Activated T-helper 2 cell treated with anti-CD3 and anti-CD28 coated beads, Interferon-gamma antibody, Interleukin-2, Interleukin-4, amounts not matched to agents 10 μg/mL and 5 μg/mL and 100 μg/mL, durations not matched to agents 14 hours and 24 hours and 36 hours (primary cell): ENCODE measurements at regions of chr2 and their contacts with region 1.

Region 1: GRCh38 chr2:55519938-55520885 is 694 bp downstream of the CFAP36 start:
- DNase-seq: no peak
- H3K4me3 Mint-ChIP-seq: peak overlapping the region; percentile 93
- H3K27ac Mint-ChIP-seq: peak overlapping the region; percentile 86
- H3K4me1 Mint-ChIP-seq: peaks cover 13% of the 10 kb centered on the region
- H3K27me3 Mint-ChIP-seq: no peaks in the 10 kb centered on the region

Region 2: GRCh38 chr2:55403256-55403998 is 116.8 kb before region 1 on chr2:
- intact Hi-C with region 1: no loop called
- DNase-seq: no peak
- H3K4me3 Mint-ChIP-seq: no peak overlapping the region
- H3K27ac Mint-ChIP-seq: no peak overlapping the region
- H3K4me1 Mint-ChIP-seq: no peaks in the 10 kb centered on the region
- H3K27me3 Mint-ChIP-seq: no peaks in the 10 kb centered on the region

Region 3: GRCh38 chr2:55530539-55531081 is 10.4 kb after region 1 on chr2:
- intact Hi-C with region 1: loop called (anchors 1 kb)
- DNase-seq: peak; percentile 24
- H3K4me3 Mint-ChIP-seq: peak overlapping the region; percentile 20
- H3K27ac Mint-ChIP-seq: peak overlapping the region; percentile 92
- H3K4me1 Mint-ChIP-seq: peaks cover 19% of the 10 kb centered on the region
- H3K27me3 Mint-ChIP-seq: no peaks in the 10 kb centered on the region

Region 4: DNA sequence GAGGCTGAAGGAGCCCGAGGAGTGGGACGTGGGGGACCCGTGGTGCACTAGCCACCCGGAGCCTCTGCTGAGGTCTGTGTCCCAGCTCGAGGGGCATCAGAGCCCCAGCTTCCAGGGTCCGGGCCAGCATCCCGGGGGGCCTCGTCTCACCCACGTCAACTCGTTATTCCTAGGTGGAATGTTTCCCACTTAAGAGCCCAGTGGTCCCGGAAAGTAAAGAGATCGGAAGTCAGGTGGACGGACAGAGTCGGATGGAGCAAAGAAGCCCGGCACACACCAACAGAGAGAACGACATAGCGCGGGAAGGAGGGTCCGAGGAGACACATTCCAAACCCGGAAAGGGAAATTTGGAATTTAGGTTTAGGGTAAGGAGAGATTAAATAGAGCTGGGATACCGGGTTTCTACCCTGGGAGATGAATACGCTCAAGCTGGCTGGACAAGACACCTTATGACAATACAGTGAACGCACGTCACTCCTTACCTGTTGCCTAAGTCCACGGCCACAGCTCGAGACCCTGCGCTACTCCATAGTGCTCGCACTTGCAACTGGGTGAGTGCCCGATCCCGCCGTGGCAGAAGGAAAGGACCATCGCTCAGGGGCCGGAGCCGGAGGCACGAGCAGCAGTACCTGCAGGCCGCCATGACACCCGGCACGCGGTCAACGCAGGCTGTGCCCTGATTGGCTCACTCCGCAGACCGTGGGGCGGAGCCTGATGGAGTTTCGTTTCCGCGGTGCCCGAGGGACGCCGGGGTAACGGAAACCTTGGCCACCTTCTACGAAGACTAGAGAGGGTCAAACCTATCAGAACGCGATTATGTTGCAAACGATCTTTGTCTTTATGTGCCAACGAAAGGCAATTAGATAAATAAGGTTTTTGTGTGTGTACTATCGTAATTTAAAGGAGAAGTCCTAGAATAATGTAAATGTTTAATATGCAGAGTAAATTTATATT is 173.2 kb after region 1 on chr2 and contains the start of gene PNPT1:
- intact Hi-C with region 1: loop called (anchors 2 kb)
- DNase-seq: peak; percentile 92
- H3K4me3 Mint-ChIP-seq: peak within 1 kb of the TSS; percentile 92
- H3K27ac Mint-ChIP-seq: peak within 1 kb of the TSS; percentile 80
- H3K4me1 Mint-ChIP-seq: peaks cover 30% of the 10 kb centered on the region
- H3K27me3 Mint-ChIP-seq: peaks cover 6% of the 10 kb centered on the region
- total RNA-seq, gene PNPT1: 53.5 and 54.3 TPM in 2 replicates

Region 5: DNA sequence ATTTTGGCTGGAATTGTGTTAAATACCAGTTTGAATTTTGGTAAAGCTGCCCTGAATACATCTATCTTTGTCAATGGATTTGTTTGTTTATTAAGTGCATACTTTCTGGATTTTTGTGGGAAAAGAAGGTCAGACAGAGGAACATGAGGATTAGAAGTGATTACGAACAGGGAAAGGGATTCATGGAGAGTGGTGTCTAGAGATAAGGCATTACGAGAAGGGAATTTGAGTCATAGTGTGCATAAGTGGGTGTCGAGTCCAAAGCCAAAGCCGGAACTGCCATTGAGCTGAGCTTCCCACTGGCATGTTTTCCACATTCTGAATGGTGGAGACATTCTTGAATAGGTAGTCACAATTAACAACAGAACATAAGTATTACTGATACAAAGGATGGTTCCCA is 472.3 kb after region 1 on chr2:
- intact Hi-C with region 1: no loop called
- DNase-seq: no peak
- H3K4me3 Mint-ChIP-seq: no peak overlapping the region
- H3K27ac Mint-ChIP-seq: no peak overlapping the region
- H3K4me1 Mint-ChIP-seq: no peaks in the 10 kb centered on the region
- H3K27me3 Mint-ChIP-seq: no peaks in the 10 kb centered on the region